ENCODE measurements at regions of chr1 and their contacts with region 1.

Region 1: GRCh38 chr1:153288634-153289275 is 24.0 kb downstream of the PGLYRP3 start:
- DNase-seq: peak; percentile 83
- H3K4me3 ChIP-seq: no peak overlapping the region
- H3K27ac ChIP-seq: no peak overlapping the region
- H3K4me1 ChIP-seq: peaks cover 34% of the 10 kb centered on the region
- H3K27me3 ChIP-seq: no peaks in the 10 kb centered on the region
- CTCF ChIP-seq: peak; percentile 75 to 89

Region 2: GRCh38 chr1:153231363-153231762 is 57.4 kb before region 1 on chr1:
- CTCF ChIA-PET with region 1: interaction called, 4 read pairs
- dilution Hi-C with region 1: no loop called
- in situ Hi-C with region 1: no loop called
- intact Hi-C with region 1: loop called (anchors 2 kb)
- DNase-seq: peak; percentile 18
- H3K4me3 ChIP-seq: no peak overlapping the region
- H3K27ac ChIP-seq: no peak overlapping the region
- H3K4me1 ChIP-seq: no peaks in the 10 kb centered on the region
- H3K27me3 ChIP-seq: no peaks in the 10 kb centered on the region
- CTCF ChIP-seq: no peak

Region 3: DNA sequence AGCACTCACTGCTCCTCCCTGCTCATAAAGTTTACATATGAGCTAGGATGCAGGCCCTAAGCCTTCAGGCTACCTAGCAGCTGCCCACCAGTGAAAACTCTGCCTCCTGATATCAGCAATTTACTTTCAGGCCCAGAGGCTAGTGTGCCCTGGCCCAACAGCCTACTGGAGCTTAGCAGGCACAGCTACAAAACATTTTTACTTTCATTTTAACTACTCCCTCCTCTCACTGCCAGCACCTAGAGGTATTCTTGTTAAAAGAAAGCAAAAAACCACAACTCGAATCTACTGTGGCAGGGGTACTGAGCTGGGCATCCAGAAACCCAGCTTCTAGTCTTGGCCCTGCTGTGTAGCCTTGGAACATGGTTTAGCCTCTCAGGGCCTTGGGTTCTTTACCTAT is 35.1 kb before region 1 on chr1:
- CTCF ChIA-PET with region 1: interaction called, 4 read pairs
- dilution Hi-C with region 1: loop called (anchors 5 kb)
- in situ Hi-C with region 1: no loop called
- intact Hi-C with region 1: no loop called
- DNase-seq: no peak
- H3K4me3 ChIP-seq: no peak overlapping the region
- H3K27ac ChIP-seq: no peak overlapping the region
- H3K4me1 ChIP-seq: no peaks in the 10 kb centered on the region
- H3K27me3 ChIP-seq: no peaks in the 10 kb centered on the region
- CTCF ChIP-seq: no peak

Region 4: GRCh38 chr1:153339802-153340201 is 51.0 kb after region 1 on chr1:
- CTCF ChIA-PET with region 1: no interaction called
- dilution Hi-C with region 1: no loop called
- in situ Hi-C with region 1: no loop called
- intact Hi-C with region 1: no loop called
- DNase-seq: no peak
- H3K4me3 ChIP-seq: no peak overlapping the region
- H3K27ac ChIP-seq: no peak overlapping the region
- H3K4me1 ChIP-seq: peaks cover 14% of the 10 kb centered on the region
- H3K27me3 ChIP-seq: no peaks in the 10 kb centered on the region
- CTCF ChIP-seq: no peak

Measured in mammary epithelial cell (primary cell).